WTC11 (cell line): ENCODE measurements at regions of chr7 and their contacts with region 1.

Region 1: GRCh38 chr7:106153891-106154449 is 41.9 kb upstream of the SYPL1 start:
- DNase-seq: peak; percentile 90
- ATAC-seq: peak; percentile 99
- H3K4me3 Mint-ChIP-seq: no peak overlapping the region
- H3K27ac Mint-ChIP-seq: no peak overlapping the region
- H3K4me1 Mint-ChIP-seq: peaks cover 9% of the 10 kb centered on the region
- H3K27me3 Mint-ChIP-seq: no peaks in the 10 kb centered on the region; the same call in 1 of the 2 replicates
- CTCF ChIP-seq: peak; percentile 64

Region 2: DNA sequence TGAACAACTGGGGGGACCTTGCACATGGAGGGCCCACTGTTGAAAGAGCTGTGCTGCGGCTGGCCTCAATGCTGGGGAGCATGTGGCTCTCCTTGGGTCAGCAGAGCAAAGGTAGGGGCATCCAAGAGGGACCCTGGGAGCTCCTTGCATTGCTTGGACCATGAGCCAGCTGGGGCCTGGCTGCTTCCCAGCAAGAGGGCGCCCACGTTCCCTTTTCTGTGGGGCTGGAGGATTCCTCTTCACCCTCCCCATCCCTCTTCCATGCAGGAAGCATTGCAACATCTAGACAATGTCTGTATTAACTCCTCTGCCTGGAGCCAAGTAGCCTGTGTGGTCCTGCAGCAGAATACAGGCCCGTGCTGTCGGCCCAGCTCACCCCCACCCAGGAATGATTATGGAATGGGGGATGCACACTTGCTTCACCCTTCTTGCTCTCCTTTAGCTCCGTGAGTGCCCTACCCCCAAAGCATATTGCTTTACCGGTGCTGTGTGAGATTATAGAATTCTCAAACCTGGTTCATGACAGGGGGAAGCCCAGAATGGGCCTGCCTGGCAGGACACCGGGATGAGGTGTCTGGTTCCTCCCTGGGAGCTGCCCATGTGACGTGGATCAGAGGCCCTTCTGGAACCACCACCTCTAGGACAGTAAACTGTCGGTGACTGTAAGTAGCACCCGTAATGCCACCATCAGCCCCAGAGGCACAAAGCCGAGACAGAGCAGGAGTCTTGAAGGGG is 103.8 kb before region 1 on chr7:
- CTCF ChIA-PET with region 1: interaction called, 44 read pairs
- POLR2A ChIA-PET with region 1: no interaction called
- DNase-seq: peak; percentile 46
- ATAC-seq: peak; percentile 79
- H3K4me3 Mint-ChIP-seq: no peak overlapping the region
- H3K27ac Mint-ChIP-seq: no peak overlapping the region
- H3K4me1 Mint-ChIP-seq: peaks cover 13% of the 10 kb centered on the region
- H3K27me3 Mint-ChIP-seq: no peaks in the 10 kb centered on the region; the same call in none of the 2 replicates
- CTCF ChIP-seq: no peak

Region 3: DNA sequence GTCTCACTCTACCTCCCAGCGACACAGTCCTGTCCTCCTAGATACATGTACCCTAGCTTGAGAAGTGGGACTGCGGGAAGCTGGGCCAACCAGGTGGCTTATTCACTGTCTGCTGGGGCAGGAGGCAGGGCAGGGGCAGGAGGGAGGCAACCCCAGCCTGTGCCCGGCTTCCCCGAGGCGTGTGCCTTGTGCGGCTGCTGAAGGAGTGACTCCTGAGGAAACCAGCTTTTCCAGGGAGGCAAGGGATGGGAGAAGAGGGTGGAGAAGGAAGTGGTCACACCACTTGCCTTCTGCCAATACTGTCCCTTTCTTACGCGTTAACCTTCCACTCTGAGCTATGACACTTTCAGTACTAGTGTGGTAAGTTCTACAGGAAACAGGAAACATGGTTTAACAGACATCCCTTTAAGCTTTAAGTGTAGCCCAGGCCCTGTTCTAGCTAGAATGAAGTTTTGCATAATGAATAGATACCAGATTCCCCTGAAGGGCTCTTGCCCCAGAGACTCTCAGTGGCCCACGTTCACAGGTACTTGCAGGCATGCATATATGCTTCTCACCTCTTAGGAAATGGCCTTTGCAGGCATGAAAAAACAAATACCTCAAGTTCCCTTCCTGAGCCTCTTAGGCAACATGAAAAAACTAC is 82.5 kb before region 1 on chr7:
- CTCF ChIA-PET with region 1: interaction called, 13 read pairs
- POLR2A ChIA-PET with region 1: no interaction called
- DNase-seq: no peak
- ATAC-seq: peak; percentile 39; the same call in 1 of the 2 replicates
- H3K4me3 Mint-ChIP-seq: no peak overlapping the region
- H3K27ac Mint-ChIP-seq: no peak overlapping the region
- H3K4me1 Mint-ChIP-seq: peaks cover 20% of the 10 kb centered on the region
- H3K27me3 Mint-ChIP-seq: no peaks in the 10 kb centered on the region
- CTCF ChIP-seq: no peak

Region 4: DNA sequence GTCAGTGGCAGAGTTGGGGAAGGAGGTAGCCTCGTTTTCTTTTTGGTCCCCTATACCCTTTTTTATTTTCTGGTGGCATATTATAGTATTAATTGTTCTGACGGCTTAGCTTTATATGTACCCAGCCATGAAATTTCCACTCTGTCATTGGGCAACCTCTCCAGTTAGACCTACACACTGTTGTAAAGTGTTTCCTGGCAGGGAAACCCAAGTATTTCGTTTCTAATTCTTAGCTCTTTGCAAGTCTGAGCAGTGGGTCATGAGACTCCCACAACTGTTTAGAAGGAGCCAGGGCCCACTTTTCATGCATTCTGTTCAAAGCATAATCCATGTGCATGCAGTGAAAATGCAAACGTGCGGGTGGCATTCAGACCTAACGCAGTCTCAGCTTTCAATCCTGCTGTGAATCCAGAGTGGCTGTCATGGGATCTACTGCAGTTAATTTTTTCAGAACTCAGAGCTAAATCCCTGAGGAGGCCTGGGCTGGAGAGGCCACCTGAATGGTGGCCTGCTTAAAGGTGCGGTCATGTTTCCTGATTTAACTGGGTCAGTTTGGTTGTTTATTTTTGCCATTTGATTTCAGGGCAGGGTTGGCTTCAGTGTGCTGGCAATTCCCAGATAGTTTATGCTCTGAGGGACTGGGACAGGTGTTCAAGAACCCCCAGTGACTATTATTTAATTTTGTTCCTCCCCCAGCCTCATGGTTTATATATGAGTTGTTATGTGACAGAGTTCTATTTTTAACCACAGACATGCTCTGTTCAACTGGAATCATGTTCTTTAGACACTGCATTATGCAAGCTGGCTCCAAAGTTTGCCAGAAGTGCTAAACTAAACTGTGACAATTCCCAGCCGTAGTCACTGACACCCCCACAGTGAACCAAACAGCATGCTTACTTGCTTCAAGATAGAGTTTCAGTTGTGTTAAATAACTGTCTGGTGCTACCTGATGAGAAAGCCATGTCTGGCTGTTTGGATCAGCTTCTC is 14.4 kb before region 1 on chr7:
- CTCF ChIA-PET with region 1: interaction called, 10 read pairs
- POLR2A ChIA-PET with region 1: interaction called, 5 read pairs
- DNase-seq: no peak
- ATAC-seq: peak; percentile 21
- H3K4me3 Mint-ChIP-seq: no peak overlapping the region
- H3K27ac Mint-ChIP-seq: peak overlapping the region; percentile 67; the same call in 1 of the 2 replicates
- H3K4me1 Mint-ChIP-seq: peaks cover 24% of the 10 kb centered on the region
- H3K27me3 Mint-ChIP-seq: no peaks in the 10 kb centered on the region; the same call in 1 of the 2 replicates
- CTCF ChIP-seq: no peak